Activated CD4-positive, alpha-beta T cell treated with anti-CD3 and anti-CD28 coated beads, Interleukin-2, amount 10 ng/mL, durations not matched to agents 7 days and 5 days (primary cell): ENCODE measurements at regions of chr4 and their contacts with region 1.

Region 1: DNA sequence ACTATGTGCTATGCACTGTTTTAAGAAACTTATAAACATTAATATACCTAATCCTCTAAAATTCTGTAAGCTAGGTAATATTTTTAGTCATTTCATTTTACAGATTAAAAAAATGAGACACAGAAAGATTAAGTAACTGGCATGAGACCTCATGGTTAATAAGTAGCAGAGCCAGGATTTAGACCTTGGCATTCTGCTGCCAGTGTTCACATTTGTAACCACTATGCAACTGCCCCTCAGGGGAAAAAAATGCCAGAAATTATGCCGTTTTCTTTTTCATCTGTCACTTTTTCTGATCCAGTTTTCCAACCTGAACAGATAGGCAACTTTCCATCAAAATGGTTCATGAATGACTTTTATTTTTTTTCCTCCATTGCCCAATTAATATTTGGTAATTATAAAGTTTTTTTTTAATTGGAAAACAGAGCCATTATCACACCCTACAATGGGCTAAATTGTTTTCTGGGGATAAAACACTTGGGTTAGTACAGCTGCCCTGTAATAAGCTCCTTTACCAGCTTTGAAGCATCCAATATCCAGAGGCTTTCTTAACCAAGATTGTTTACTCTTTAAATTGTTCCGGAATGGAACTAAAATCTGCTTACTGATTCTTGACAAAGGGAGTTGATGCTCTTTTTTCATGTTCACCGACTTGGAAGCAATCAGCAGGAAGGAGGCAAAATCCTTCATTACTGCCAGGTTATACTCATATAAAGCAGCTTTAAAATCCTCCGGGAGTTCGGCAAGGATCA is 56.4 kb upstream of the DDX60 start:
- DNase-seq: no peak
- H3K4me3 Mint-ChIP-seq: no peak overlapping the region
- H3K27ac Mint-ChIP-seq: no peak overlapping the region
- H3K4me1 Mint-ChIP-seq: no peaks in the 10 kb centered on the region
- H3K27me3 Mint-ChIP-seq: no peaks in the 10 kb centered on the region

Region 2: DNA sequence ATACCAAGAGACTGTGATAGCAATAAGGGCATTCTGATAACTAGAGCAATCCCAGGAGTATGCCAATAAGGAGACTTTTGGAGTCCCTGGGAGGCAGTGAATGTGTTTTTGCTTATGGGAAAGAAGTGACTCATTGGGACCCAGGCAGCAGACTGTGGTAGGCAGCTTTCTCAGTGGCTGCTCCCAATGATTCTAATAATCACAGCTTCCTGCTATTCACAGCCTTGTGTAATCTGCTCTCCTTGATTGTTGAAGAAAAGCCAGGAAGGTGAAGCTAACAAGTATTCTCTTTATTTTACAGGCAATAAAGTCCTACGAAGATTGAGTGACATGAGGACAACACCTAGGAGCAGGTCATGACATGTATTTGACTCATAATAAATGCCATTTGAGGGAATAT is 13.9 kb after region 1 on chr4:
- CTCF ChIA-PET with region 1: interaction called, 11 read pairs
- POLR2A ChIA-PET with region 1: no interaction called
- DNase-seq: no peak
- H3K4me3 Mint-ChIP-seq: no peak overlapping the region
- H3K27ac Mint-ChIP-seq: no peak overlapping the region
- H3K4me1 Mint-ChIP-seq: peaks cover 2% of the 10 kb centered on the region
- H3K27me3 Mint-ChIP-seq: no peaks in the 10 kb centered on the region

Region 3: DNA sequence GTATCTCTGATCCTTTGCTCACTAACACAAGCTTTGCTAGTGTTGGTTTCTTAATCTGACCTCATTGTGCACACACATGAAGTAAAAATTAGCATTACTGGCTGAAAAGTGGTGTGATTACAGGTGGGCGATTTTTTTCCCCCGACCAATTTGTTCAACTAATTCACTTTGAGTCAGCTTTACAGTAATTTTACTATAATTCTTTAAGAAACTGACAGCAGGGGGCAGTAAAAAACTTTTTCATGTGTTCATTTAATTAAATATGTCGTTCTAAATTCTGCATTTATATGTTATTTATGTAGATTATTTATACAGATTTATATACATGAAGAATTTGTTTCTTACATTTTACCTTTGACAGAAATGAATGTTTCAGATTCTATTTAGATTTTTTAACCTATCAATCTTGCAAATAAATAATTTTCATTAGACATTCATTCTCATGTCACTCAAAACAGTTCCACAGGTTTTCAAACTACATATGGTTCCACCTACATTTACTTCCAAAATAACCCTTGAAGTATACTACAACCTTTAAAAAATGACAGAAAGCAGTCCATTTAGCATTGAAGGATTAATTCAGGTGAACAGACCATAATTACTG is 139.4 kb after region 1 on chr4:
- CTCF ChIA-PET with region 1: no interaction called
- POLR2A ChIA-PET with region 1: no interaction called
- DNase-seq: no peak
- H3K4me3 Mint-ChIP-seq: no peak overlapping the region
- H3K27ac Mint-ChIP-seq: no peak overlapping the region
- H3K4me1 Mint-ChIP-seq: peaks cover 35% of the 10 kb centered on the region
- H3K27me3 Mint-ChIP-seq: peaks cover 12% of the 10 kb centered on the region

Region 4: GRCh38 chr4:168942985-168943384 is 568.0 kb after region 1 on chr4:
- CTCF ChIA-PET with region 1: no interaction called
- POLR2A ChIA-PET with region 1: no interaction called
- DNase-seq: peak; percentile 9
- H3K4me3 Mint-ChIP-seq: no peak overlapping the region
- H3K27ac Mint-ChIP-seq: no peak overlapping the region
- H3K4me1 Mint-ChIP-seq: no peaks in the 10 kb centered on the region
- H3K27me3 Mint-ChIP-seq: peaks cover 3% of the 10 kb centered on the region